WTC11 (cell line): ENCODE measurements at regions of chr1 and their contacts with region 1.

Region 1: DNA sequence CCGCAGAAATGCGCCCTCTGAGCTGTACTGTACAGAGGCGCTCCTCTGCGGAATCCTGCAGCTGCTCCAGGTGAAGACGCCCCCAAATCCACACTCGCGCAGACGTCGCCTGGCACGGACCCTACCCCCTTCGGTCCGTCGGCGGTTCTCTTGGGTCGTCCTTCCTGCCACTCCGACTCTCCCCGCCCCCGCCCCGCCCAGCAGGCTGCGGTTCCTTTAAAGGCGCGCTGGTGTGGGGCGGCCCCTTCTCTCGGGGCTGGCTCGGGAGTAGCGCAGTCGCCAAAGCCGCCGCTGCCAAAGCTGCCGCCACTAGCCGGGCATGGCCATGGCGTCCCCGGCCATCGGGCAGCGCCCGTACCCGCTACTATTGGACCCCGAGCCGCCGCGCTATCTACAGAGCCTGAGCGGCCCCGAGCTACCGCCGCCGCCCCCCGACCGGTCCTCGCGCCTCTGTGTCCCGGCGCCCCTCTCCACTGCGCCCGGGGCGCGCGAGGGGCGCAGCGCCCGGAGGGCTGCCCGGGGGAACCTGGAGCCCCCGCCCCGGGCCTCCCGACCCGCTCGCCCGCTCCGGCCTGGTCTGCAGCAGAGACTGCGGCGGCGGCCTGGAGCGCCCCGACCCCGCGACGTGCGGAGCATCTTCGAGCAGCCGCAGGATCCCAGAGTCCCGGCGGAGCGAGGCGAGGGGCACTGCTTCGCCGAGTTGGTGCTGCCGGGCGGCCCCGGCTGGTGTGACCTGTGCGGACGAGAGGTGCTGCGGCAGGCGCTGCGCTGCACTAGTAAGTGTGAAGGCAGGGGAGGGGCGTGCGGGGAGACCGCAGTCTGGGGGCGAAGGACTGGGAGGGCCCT is at the start of gene RASSF5:
- DNase-seq: peak; percentile 87
- ATAC-seq: peak; percentile 87
- H3K4me3 Mint-ChIP-seq: peak within 1 kb of the TSS; percentile 68
- H3K27ac Mint-ChIP-seq: no peak within 1 kb of the TSS
- H3K4me1 Mint-ChIP-seq: peaks cover 25% of the 10 kb centered on the region
- H3K27me3 Mint-ChIP-seq: peaks cover 76% of the 10 kb centered on the region
- CTCF ChIP-seq: no peak
- total RNA-seq, gene RASSF5: 1.7 to 2.1 TPM (median 1.7 TPM) in 3 replicates

Region 2: GRCh38 chr1:206445116-206445515 is 62.4 kb before region 1 on chr1:
- CTCF ChIA-PET with region 1: no interaction called
- POLR2A ChIA-PET with region 1: no interaction called
- DNase-seq: no peak
- ATAC-seq: no peak
- H3K4me3 Mint-ChIP-seq: no peak overlapping the region
- H3K27ac Mint-ChIP-seq: no peak overlapping the region
- H3K4me1 Mint-ChIP-seq: no peaks in the 10 kb centered on the region
- H3K27me3 Mint-ChIP-seq: no peaks in the 10 kb centered on the region
- CTCF ChIP-seq: no peak

Region 3: GRCh38 chr1:206469933-206470691 is 37.4 kb before region 1 on chr1 and contains the start of gene IKBKE:
- CTCF ChIA-PET with region 1: interaction called, 11 read pairs
- POLR2A ChIA-PET with region 1: no interaction called
- DNase-seq: peak; percentile 41
- ATAC-seq: peak; percentile 64
- H3K4me3 Mint-ChIP-seq: peak within 1 kb of the TSS; percentile 69
- H3K27ac Mint-ChIP-seq: peak within 1 kb of the TSS; percentile 41; the same call in 1 of the 2 replicates
- H3K4me1 Mint-ChIP-seq: peaks cover 59% of the 10 kb centered on the region
- H3K27me3 Mint-ChIP-seq: peaks cover 16% of the 10 kb centered on the region
- CTCF ChIP-seq: no peak
- total RNA-seq, gene IKBKE: 7.8 to 8.1 TPM (median 8.0 TPM) in 3 replicates

Region 4: DNA sequence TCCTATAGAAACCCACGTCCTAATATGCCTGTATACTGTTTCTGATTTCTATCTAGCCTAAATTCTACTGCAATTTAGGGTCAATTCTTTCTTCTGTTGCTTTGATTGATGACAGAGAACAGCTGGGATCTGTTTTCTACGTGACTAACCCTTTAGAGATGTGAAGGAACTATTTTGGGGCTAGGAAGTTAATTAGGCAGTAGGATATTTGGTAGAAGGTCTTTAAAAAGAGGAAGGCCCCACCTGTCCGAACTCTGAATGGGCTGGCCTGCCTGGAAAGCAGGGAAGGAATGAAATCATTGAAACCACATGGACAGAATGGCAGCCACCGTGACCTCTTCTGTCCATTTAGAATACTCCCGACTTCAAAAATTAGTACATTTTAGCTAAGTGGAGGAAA is 83.7 kb after region 1 on chr1:
- CTCF ChIA-PET with region 1: no interaction called
- POLR2A ChIA-PET with region 1: no interaction called
- DNase-seq: no peak
- ATAC-seq: no peak
- H3K4me3 Mint-ChIP-seq: no peak overlapping the region
- H3K27ac Mint-ChIP-seq: no peak overlapping the region
- H3K4me1 Mint-ChIP-seq: no peaks in the 10 kb centered on the region
- H3K27me3 Mint-ChIP-seq: no peaks in the 10 kb centered on the region
- CTCF ChIP-seq: no peak